ENCODE measurements at regions of chr12 and their contacts with region 1.

Region 1: DNA sequence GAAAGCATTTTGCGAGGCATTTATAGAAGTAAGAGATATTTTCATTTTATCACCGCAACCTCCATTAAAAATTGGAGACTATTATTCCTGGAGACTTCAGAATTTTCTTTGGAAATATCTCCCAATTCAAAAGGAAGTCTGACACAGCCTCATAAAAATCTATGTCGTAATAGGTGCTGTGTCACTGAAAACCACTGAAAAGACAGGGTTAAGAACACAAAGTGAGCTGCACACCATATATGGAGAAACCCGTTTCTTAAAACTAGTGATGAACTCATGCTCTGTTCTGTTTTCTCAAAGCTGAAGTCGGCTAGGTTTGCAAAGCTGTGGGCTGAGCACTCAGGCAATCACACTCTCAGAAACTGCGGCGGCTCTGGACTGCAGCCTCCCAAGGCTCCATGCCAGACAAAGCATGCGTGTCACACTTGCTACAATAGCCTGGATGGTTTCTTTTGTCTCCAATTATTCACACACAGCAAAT is at the start of gene GLIPR1:
- DNase-seq: peak; percentile 87 to 93 (median 93)
- H3K4me3 ChIP-seq: peak within 1 kb of the TSS; percentile 92 to 100 (median 97)
- H3K4me3 Mint-ChIP-seq: peak within 1 kb of the TSS; percentile 96 to 98
- H3K27ac ChIP-seq: peak within 1 kb of the TSS; percentile 90 to 95
- H3K27ac Mint-ChIP-seq: peak within 1 kb of the TSS; percentile 93 to 100 (median 99)
- H3K4me1 ChIP-seq: peaks cover 65 to 82% of the 10 kb centered on the region in 2 donors
- H3K4me1 Mint-ChIP-seq: peaks cover 81% of the 10 kb centered on the region
- H3K27me3 ChIP-seq: no peaks in the 10 kb centered on the region
- H3K27me3 Mint-ChIP-seq: peaks cover 0 to 3% (median 0%) of the 10 kb centered on the region in 3 donors
- CTCF ChIP-seq: no peak
- polyA plus RNA-seq, gene GLIPR1: 200 to 794 (median 687) TPM

Region 2: DNA sequence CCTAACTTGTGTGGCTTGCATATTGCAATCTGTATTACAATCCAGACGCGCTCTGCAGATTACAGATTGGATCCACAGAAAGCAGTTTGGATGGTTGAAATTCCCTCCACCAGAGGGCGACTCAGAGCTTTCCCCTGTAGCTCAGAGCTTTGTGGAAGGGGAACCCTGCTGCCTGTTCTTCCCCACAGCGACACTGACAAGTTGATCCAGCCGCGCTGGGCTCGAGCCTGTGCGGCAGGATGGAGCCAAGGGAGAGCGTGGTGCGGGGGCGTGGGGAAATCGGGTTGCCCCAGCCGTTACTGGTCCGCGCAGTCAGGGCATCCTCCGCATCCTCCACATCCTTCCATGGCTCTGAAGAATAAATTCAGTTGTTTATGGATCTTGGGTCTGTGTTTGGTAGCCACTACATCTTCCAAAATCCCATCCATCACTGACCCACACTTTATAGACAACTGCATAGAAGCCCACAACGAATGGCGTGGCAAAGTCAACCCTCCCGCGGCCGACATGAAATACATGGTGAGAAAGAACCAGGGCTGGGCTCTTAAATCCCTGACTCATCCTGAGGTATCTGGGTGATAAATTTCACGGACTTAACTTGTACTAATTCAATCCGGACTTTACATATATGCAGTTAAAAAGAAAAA is 146.0 kb before region 1 on chr12 and contains the start of gene GLIPR1L1:
- intact Hi-C with region 1: loop called (anchors 10 kb)
- DNase-seq: peak; percentile 76 to 87 (median 83)
- H3K4me3 ChIP-seq: peak within 1 kb of the TSS; percentile 11 to 69 (median 12)
- H3K4me3 Mint-ChIP-seq: peak within 1 kb of the TSS; percentile 71 to 90
- H3K27ac ChIP-seq: no peak within 1 kb of the TSS
- H3K27ac Mint-ChIP-seq: peak within 1 kb of the TSS in 1 of 7 donors; percentile 72
- H3K4me1 ChIP-seq: peaks cover 16 to 18% of the 10 kb centered on the region in 2 donors
- H3K4me1 Mint-ChIP-seq: peaks cover 18% of the 10 kb centered on the region
- H3K27me3 ChIP-seq: peaks cover 0 to 6% of the 10 kb centered on the region in 2 donors
- H3K27me3 Mint-ChIP-seq: peaks cover 4 to 14% (median 9%) of the 10 kb centered on the region in 3 donors
- CTCF ChIP-seq: peak; percentile 89
- polyA plus RNA-seq, gene GLIPR1L1: not detected

Region 3: DNA sequence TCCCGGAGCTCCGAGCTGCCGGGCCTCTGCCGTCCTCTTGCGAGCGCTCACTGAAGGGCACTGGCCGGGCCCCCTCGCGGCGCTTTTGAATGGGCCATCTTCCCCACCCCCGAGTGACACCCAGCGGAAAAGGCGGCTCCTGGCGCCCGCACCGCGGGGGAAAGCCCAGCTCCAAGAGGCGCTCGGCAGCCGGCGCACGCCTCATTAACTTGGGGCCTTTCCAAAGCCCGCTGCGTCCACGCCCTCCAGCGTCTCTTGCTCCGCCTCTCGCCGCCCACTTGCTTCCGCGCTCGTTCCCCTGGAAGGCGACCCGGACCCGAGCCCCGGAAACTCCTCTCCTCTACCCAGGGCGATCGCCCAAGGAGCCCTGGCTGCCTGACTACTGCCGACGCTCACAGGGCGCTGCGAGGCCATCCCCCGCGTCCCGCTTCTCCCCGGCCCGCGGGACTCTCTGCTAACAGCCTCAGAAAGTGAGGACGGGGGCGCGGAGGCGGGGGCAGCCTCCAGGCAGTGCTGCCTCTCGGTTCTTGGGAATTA is 551.1 kb after region 1 on chr12 and contains the start of gene PHLDA1:
- intact Hi-C with region 1: loop called in 1 of 2 experiments (anchors 10 kb)
- DNase-seq: peak; percentile 90 to 94 (median 92)
- H3K4me3 ChIP-seq: peak within 1 kb of the TSS; percentile 60 to 77 (median 64)
- H3K4me3 Mint-ChIP-seq: peak within 1 kb of the TSS; percentile 96 to 97
- H3K27ac ChIP-seq: peak within 1 kb of the TSS; percentile 11 to 73
- H3K27ac Mint-ChIP-seq: peak within 1 kb of the TSS; percentile 54 to 91 (median 86)
- H3K4me1 ChIP-seq: peaks cover 27 to 29% of the 10 kb centered on the region in 2 donors
- H3K4me1 Mint-ChIP-seq: peaks cover 23% of the 10 kb centered on the region
- H3K27me3 ChIP-seq: peaks cover 36 to 58% of the 10 kb centered on the region in 2 donors
- H3K27me3 Mint-ChIP-seq: peaks cover 54 to 67% (median 58%) of the 10 kb centered on the region in 3 donors
- CTCF ChIP-seq: peak; percentile 67
- polyA plus RNA-seq, gene PHLDA1: 1.1 to 5.8 (median 1.6) TPM

Measured in CD14-positive monocyte (primary cell).